ENCODE measurements at regions of chr11 and their contacts with region 1.

Region 1: DNA sequence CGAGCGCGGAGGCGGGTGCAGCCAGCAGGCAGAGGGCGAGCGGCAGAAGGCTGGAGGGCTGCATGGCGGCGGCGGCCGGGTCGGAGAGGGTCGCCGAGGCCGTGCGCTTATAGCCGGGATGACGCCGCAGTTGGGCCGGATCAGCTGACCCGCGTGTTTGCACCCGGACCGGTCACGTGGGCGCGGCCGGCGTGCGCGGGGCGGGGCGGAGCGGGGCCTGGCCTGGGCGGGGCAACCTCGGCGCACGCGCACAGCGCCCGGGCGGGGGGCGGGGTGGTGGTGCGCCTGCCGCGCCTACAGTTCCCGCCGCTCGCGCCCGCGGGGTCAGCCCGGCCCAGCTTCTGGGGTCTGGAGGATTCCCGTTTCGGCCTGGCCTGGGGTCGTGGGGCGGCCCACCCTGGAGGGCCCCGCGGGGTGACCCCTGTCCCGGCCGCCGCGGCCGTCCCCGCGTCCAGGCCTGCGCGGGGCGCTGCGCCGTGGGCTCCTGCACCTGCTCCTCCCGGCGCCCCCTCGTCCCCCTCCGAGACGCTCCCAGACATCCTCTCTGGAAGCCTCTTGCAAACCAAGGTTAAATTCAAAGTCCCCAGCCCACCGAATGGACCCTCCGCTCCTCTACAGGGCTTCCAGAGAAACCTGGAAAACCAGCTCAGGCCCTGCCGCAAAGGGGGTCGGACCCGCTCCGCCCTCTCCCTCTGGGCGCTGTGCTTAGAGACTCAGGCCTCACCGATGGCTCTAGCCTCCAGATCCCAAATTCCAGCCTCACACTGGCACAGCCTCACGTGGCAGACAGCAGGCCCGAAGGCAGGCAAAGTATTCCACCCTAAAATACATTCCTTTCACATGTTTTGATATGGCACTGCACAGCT is at the start of gene CTSD:
- DNase-seq: peak; percentile 94
- H3K4me3 ChIP-seq: peak within 1 kb of the TSS; percentile 87 to 100 (median 94)
- H3K27ac ChIP-seq: peak within 1 kb of the TSS; percentile 83 to 89 (median 86)
- H3K4me1 ChIP-seq: peaks cover 0 to 50% (median 41%) of the 10 kb centered on the region in 4 donors
- H3K27me3 ChIP-seq: no peaks in the 10 kb centered on the region
- CTCF ChIP-seq: no peak
- EP300 ChIP-seq: no peak
- POLR2A ChIP-seq: peak in 1 of 2 donors; percentile 50
- total RNA-seq, gene CTSD: 173 to 222 (median 209) TPM

Region 2: GRCh38 chr11:1717745-1718144 is 46.3 kb before region 1 on chr11:
- intact Hi-C with region 1: no loop called
- DNase-seq: no peak
- H3K4me3 ChIP-seq: no peak overlapping the region
- H3K27ac ChIP-seq: no peak overlapping the region
- H3K4me1 ChIP-seq: no peaks in the 10 kb centered on the region
- H3K27me3 ChIP-seq: peaks cover 0 to 18% (median 0%) of the 10 kb centered on the region in 3 donors
- CTCF ChIP-seq: no peak
- EP300 ChIP-seq: no peak
- POLR2A ChIP-seq: no peak

Region 3: DNA sequence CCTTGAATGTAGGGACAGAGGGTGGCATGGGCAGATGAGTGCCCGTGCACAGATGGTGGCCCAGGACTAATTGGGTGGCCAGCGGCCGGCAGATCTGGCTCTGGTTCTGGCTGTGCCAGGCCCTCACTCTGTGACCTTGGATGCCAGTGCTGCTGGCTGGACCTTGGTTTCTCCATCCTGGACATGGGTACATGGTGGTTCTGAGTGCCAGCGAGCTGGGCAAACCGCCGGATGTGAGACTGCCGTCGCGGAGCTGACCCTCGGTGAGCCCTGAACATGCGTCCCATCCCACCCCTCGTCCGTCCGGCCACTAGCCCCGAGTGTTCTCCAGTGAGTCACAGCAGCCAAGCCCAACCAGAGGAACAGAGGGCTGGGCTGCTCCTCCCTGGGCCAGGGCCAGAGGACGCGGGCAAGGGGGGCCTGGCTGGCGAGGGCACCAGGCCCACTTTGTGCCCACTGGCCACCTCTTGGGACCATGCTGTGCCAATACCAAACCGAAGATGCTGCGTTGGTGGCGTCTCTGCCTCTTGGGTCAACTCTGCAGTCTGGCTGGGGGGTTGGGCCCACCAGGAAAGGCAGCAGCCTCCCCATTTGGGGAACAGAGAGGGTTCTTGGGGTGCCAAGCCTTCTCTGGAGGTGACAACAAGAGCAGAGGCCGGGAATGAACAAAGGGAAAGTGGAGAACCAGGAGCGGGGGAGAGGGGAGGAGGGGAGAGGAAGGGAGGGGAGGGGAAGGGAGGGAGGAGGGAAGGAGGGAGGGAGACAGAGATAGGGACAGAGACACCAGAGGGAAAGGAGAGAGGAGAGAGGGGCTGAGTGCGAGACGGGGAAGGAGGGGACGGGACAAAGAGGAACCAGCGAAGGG is 99.6 kb after region 1 on chr11:
- intact Hi-C with region 1: loop called (anchors 5 kb)
- DNase-seq: peak; percentile 94
- H3K4me3 ChIP-seq: peak overlapping the region in 3 of 4 donors; percentile 29 to 41 (median 40)
- H3K27ac ChIP-seq: peak overlapping the region; percentile 84 to 91 (median 88)
- H3K4me1 ChIP-seq: peaks cover 0 to 45% (median 42%) of the 10 kb centered on the region in 4 donors
- H3K27me3 ChIP-seq: no peaks in the 10 kb centered on the region
- CTCF ChIP-seq: no peak
- EP300 ChIP-seq: no peak
- POLR2A ChIP-seq: no peak

Measured in sigmoid colon (tissue), 7 donors.